ENCODE measurements at regions of chr7 and their contacts with region 1.

Region 1: DNA sequence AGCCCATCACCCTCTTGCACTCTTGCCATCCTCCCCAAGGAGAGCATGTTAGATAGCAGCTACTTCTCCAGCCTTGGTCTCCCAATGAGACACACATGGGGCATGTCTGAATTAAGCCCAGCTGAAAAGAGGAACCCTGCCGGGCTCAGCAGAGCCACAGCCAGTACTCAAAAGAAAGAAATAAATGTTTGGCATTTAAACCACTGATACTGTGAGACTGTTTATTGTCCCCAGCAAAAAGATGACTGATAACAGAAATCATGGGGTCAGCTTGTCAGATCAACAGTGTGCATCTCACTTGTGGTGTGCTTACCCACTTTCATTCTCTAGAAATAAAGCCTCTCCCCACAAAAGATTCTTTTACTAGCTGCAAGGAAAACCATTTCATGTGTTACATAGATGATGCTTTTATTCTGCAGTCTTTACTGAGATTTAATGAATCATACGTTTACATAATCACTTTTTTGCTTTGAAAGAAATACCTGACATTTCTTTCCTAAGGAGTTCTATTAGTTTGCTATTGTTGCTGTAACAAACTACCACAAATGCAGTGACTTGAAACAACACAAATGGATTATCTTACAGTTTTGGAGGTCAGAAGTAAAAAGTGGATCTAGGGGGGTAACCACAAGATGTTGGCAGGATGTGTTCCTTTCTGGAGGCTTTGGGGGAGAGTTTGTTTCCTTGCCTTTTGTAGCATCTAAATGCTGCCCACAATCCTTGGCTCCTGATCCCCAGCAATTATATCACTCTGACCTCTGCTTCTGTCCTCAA is 20.9 kb downstream of the ANKRD7 start:
- DNase-seq: no peak
- H3K4me3 ChIP-seq: no peak overlapping the region
- H3K27ac ChIP-seq: no peak overlapping the region
- H3K4me1 ChIP-seq: no peaks in the 10 kb centered on the region
- H3K27me3 ChIP-seq: no peaks in the 10 kb centered on the region
- CTCF ChIP-seq: no peak
- POLR2A ChIP-seq: no peak

Region 2: GRCh38 chr7:118288098-118288497 is 42.6 kb after region 1 on chr7:
- intact Hi-C with region 1: no loop called
- DNase-seq: no peak
- H3K4me3 ChIP-seq: no peak overlapping the region
- H3K27ac ChIP-seq: no peak overlapping the region
- H3K4me1 ChIP-seq: no peaks in the 10 kb centered on the region
- H3K27me3 ChIP-seq: no peaks in the 10 kb centered on the region
- CTCF ChIP-seq: no peak
- POLR2A ChIP-seq: no peak

Region 3: DNA sequence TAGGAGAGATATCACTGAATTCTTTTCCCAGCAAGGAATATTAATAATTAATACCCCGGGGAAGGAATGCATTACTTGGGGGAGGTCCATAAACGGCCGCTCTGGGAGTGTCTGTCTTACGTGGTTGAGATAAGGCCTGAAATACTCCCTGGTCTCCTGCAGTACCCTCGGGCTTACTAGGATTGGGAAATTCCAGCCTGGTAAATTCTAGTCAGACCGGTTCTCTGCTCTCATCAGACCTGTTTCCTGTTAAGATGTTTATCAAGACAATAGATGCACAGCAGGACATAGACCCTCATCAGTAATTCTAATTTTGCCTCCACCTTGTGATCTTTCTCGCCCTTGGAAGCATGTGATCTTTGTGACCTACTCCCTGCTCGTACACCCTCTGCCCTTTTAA is 1864.7 kb after region 1 on chr7:
- intact Hi-C with region 1: loop called (anchors 10 kb)
- DNase-seq: no peak
- H3K4me3 ChIP-seq: no peak overlapping the region
- H3K27ac ChIP-seq: no peak overlapping the region
- H3K4me1 ChIP-seq: no peaks in the 10 kb centered on the region
- H3K27me3 ChIP-seq: no peaks in the 10 kb centered on the region
- CTCF ChIP-seq: no peak
- POLR2A ChIP-seq: no peak